Activated B cell treated with CpG ODN at 0.5 μM for 24 hours (primary cell): ENCODE measurements at regions of chr6 and their contacts with region 1.

Region 1: DNA sequence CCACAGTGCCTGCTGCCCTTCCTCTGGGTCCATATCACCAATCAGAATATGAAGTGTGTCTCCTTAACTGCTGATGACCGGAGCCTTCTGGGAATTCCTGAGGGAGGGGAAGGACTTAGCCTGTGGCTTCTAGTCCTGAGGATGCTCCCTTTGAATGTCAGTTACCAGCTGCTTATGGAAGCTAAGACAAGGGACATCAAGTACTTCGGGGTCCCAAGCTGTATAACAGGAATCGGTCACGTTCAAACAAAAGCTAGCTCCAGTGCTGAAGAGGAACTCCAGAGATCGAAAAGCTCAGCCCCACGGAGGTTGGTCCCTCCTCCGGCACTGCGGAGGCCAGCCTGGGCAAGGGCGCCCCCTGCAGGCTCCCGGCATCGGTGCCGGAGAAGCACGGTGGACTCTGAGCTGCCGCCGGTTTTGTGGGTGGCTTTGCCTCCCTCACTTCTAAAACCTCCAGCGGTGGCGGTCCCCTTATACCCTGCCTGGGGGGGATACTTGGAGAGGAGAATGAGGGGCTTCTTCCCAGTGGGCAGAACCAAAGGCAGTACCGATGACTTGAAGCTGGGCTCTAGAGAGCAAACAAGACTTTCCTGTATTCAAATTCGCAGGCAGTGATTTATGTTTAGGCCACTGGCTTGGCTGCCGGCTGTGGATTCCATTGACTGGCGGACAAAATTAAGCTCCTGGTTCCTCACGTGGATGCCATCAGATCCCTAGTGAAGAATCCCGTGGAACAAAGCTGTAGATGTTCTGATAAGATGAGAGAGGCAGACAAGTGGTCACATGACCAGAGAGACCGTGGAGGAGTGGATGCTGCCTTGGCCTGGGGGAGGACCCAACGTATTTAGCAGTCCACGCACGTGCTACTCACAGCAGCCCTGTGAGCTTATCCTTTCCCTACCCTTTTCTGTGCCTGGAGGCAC is 16.2 kb upstream of the UBR2 start:
- DNase-seq: peak; percentile 90
- ATAC-seq: peak; percentile 99
- H3K4me3 Mint-ChIP-seq: peak overlapping the region; percentile 81
- H3K27ac Mint-ChIP-seq: peak overlapping the region; percentile 83
- H3K4me1 Mint-ChIP-seq: peaks cover 12% of the 10 kb centered on the region
- H3K27me3 Mint-ChIP-seq: no peaks in the 10 kb centered on the region
- CTCF ChIP-seq: peak; percentile 90

Region 2: GRCh38 chr6:42217519-42218367 is 329.9 kb before region 1 on chr6 and contains the start of gene MRPS10:
- CTCF ChIA-PET with region 1: interaction called, 15 read pairs
- POLR2A ChIA-PET with region 1: interaction called, 7 read pairs
- intact Hi-C with region 1: loop called (anchors 1 kb)
- DNase-seq: peak; percentile 76
- ATAC-seq: peak; percentile 99
- H3K4me3 Mint-ChIP-seq: peak within 1 kb of the TSS; percentile 99
- H3K27ac Mint-ChIP-seq: peak within 1 kb of the TSS; percentile 95
- H3K4me1 Mint-ChIP-seq: peaks cover 30% of the 10 kb centered on the region
- H3K27me3 Mint-ChIP-seq: no peaks in the 10 kb centered on the region
- CTCF ChIP-seq: no peak
- total RNA-seq, gene MRPS10: 35.7 and 37.0 TPM in 2 replicates

Region 3: DNA sequence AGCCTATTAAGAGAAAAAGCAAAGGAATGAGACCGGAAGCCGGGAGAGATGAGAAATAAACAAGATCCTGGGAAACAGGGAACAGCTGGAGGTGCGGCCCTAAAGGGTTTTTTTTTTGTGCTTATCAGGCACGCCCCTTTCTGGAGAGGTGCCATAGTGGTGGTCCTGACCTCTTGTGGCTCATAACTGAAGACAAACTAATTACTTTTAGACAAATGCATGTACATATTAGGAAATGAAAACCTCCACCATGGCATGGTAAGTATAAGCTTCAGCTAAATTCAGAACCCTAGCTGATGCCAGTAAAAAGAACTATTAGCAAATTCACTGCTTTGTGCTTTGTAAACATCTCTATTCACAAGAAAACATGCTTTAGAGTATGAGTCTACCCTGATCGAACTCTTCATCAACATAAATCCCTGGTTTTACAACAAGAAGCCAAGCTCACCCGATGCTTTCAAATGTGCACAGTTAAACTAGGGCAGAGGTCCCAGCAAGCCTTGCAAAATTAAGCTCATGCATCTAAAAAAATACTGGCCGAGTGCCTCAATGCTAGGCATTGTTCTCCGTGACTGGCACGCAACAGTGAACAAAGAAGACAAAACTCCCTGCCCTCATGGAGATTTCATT is 233.6 kb before region 1 on chr6:
- CTCF ChIA-PET with region 1: interaction called, 29 read pairs
- POLR2A ChIA-PET with region 1: interaction called, 4 read pairs
- intact Hi-C with region 1: loop called (anchors 1 kb)
- DNase-seq: no peak
- ATAC-seq: no peak
- H3K4me3 Mint-ChIP-seq: no peak overlapping the region
- H3K27ac Mint-ChIP-seq: no peak overlapping the region
- H3K4me1 Mint-ChIP-seq: peaks cover 17% of the 10 kb centered on the region
- H3K27me3 Mint-ChIP-seq: no peaks in the 10 kb centered on the region
- CTCF ChIP-seq: no peak

Region 4: DNA sequence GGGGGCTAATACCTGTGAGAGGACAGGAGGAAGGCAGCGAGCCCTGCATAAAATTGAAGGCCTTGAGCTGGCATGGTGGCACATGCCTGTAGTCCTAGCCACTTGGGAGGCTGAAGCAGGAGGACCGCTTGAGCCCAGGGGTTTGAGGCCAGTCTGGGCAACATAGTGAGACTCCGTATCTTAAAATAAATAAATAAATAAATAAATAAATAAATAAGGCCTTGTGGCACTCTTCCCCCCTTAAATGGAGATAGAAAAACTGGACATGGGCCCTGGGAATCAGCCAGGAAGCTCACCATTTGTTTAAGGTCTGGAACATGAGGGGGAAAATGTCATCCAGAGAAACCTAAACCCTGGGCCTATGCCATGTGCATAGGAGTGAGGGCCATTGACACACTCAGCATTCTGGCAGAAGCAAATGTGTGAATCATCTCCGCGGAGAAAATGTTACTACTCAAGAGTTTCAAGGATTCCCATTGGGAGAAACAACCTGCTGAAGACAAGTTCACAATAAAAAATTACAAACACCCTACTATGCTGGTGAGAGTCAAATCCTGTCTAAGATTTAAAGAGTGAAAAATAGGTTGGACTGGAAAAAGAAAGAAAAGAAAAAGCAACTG is 35.8 kb before region 1 on chr6:
- CTCF ChIA-PET with region 1: interaction called, 44 read pairs
- POLR2A ChIA-PET with region 1: no interaction called
- intact Hi-C with region 1: loop called (anchors 1 kb)
- DNase-seq: no peak
- ATAC-seq: no peak
- H3K4me3 Mint-ChIP-seq: no peak overlapping the region
- H3K27ac Mint-ChIP-seq: no peak overlapping the region
- H3K4me1 Mint-ChIP-seq: peaks cover 22% of the 10 kb centered on the region
- H3K27me3 Mint-ChIP-seq: no peaks in the 10 kb centered on the region
- CTCF ChIP-seq: no peak

Region 5: DNA sequence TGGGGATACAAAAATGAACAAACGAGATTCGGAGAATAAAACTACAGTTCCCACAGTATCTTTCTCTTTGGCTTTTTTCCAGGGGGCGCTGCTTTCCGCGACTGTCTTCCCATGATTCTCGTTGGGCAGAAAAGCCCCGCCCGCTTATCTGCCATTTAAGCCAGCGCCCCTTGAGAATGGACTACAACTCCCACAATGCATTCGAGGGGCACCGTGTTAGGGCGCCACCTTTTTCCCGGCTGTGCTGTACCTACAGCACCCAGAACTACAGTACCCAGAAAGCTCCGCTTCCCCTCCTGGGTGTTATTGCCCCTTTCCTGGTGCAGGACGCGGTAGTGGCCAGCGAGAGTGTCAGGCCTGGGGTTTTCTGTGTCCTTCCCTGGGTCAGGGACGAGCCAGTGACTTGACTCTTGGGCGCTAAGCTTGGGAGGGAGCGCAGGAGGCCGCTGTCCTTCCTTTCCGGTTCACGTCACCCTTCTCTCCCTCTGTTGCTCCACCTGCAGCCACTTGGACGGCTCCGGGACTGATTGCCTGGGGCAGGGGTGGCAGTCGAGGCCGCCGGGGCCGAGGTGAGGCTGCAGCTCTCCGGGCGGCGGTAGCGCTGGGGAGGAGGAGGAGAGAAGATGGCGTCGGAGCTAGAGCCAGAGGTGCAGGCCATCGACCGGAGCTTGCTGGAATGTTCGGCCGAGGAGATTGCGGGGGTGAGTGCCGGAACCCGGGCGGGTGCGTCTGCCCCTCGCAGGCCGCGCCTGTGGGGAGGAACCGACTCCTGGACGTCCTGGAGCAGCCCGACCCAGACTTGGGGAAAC is 16.2 kb after region 1 on chr6 and contains the start of gene UBR2:
- CTCF ChIA-PET with region 1: interaction called, 27 read pairs
- POLR2A ChIA-PET with region 1: interaction called, 26 read pairs
- intact Hi-C with region 1: loop called (anchors 1 kb)
- DNase-seq: peak; percentile 73
- ATAC-seq: peak; percentile 96
- H3K4me3 Mint-ChIP-seq: peak within 1 kb of the TSS; percentile 92
- H3K27ac Mint-ChIP-seq: peak within 1 kb of the TSS; percentile 92
- H3K4me1 Mint-ChIP-seq: peaks cover 43% of the 10 kb centered on the region
- H3K27me3 Mint-ChIP-seq: no peaks in the 10 kb centered on the region
- CTCF ChIP-seq: no peak
- total RNA-seq, gene UBR2: 34.3 and 40.8 TPM in 2 replicates